ENCODE measurements at regions of chr2 and their contacts with region 1.

Region 1: GRCh38 chr2:32277674-32278482 is at the start of gene YIPF4:
- DNase-seq: peak; percentile 93
- H3K4me3 Mint-ChIP-seq: peak within 1 kb of the TSS; percentile 89
- H3K27ac Mint-ChIP-seq: peak within 1 kb of the TSS; percentile 99
- H3K4me1 Mint-ChIP-seq: peaks cover under 1% of the 10 kb centered on the region
- H3K27me3 Mint-ChIP-seq: no peaks in the 10 kb centered on the region
- CTCF ChIP-seq: no peak
- total RNA-seq, gene YIPF4: 67.6 and 90.3 TPM in 2 replicates

Region 2: GRCh38 chr2:32235315-32235714 is 42.6 kb before region 1 on chr2:
- CTCF ChIA-PET with region 1: no interaction called
- POLR2A ChIA-PET with region 1: interaction called, 14 read pairs
- intact Hi-C with region 1: no loop called
- DNase-seq: peak; percentile 82
- H3K4me3 Mint-ChIP-seq: no peak overlapping the region
- H3K27ac Mint-ChIP-seq: peak overlapping the region; percentile 0
- H3K4me1 Mint-ChIP-seq: peaks cover 29% of the 10 kb centered on the region
- H3K27me3 Mint-ChIP-seq: no peaks in the 10 kb centered on the region
- CTCF ChIP-seq: no peak

Region 3: DNA sequence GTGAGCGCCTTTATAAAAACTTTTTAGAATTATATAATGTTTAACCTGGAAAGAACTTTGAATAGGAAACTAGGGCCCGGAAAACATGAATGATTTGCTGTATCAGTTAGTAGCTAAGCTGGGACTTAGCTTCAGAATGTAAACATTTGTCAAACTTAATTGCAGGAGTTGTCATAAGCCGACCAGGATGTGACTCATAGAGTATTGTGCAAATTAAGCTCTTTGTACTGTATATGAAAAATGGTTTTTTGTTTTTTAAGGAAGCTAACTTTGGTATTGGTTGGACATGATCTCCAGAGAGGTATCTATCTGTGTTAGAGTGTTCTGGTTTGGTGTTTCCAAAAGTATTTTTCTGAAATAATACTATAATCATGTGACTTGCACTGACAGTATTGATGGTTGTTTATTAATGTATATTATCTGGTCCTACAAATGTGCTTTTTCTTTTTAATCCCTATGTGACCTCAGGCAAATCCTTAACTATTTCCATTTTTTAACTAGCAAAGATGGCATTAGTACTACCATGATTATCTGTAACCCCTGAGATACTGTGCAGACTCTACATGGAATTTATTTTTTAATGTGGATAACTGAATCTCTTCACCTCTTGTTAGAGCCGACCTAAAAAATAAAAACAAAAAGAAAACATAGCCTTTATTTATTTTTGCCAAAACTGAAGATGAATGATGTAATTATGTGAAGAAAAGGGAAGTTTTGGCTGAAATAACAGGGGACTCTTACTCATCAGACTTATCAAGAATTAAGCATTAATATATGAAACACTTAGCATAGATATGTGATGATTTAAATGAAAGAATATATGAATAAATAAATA is 11.5 kb after region 1 on chr2:
- CTCF ChIA-PET with region 1: interaction called, 3 read pairs
- POLR2A ChIA-PET with region 1: interaction called, 23 read pairs
- intact Hi-C with region 1: no loop called
- DNase-seq: peak; percentile 85
- H3K4me3 Mint-ChIP-seq: peak overlapping the region; percentile 14
- H3K27ac Mint-ChIP-seq: peak overlapping the region; percentile 54
- H3K4me1 Mint-ChIP-seq: peaks cover 20% of the 10 kb centered on the region
- H3K27me3 Mint-ChIP-seq: no peaks in the 10 kb centered on the region
- CTCF ChIP-seq: no peak

Measured in MCF 10A (cell line).